MCF 10A (cell line): ENCODE measurements at regions of chr2 and their contacts with region 1.

Region 1: GRCh38 chr2:88159955-88160415 is 10.2 kb upstream of the THNSL2 start:
- DNase-seq: peak; percentile 78
- H3K4me3 Mint-ChIP-seq: no peak overlapping the region
- H3K27ac Mint-ChIP-seq: no peak overlapping the region
- H3K4me1 Mint-ChIP-seq: no peaks in the 10 kb centered on the region
- H3K27me3 Mint-ChIP-seq: no peaks in the 10 kb centered on the region
- CTCF ChIP-seq: peak; percentile 78

Region 2: DNA sequence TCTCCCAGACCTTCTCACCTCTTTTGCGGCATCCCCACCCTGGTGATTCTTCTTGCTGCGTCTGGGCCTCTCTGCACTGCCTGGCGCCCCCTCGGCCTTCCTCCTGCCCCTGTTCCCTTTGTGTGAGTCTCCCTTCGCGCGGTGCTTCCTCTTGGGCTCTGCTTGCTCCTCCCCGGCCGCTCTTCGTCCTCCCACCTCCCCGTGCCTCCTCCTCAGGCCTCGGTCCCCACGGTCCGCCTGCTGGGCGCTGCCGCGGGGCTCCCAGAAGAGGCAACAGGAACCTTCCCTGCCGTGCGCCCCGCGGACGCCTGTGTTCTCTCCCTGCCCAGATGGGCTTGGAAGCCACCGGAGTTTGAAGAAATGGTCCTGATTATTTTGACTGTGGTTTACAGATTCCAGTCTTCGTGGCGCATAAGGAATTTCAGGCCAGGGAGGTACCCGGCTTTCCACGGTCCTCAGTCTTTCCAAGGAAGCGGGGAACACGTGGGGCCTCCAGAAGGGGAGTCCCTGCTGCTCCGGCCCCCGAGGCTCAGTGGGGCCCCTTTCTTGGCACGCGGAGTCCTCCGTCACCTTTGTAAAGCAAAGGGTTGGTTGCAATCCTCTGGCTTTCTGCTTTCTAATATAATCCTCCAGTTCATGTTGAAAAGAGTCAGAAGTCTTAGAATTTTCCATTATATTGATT is 156.8 kb before region 1 on chr2:
- CTCF ChIA-PET with region 1: interaction called, 5 read pairs
- POLR2A ChIA-PET with region 1: no interaction called
- intact Hi-C with region 1: loop called (anchors 2 kb)
- DNase-seq: no peak
- H3K4me3 Mint-ChIP-seq: no peak overlapping the region
- H3K27ac Mint-ChIP-seq: no peak overlapping the region
- H3K4me1 Mint-ChIP-seq: no peaks in the 10 kb centered on the region
- H3K27me3 Mint-ChIP-seq: no peaks in the 10 kb centered on the region
- CTCF ChIP-seq: no peak

Region 3: DNA sequence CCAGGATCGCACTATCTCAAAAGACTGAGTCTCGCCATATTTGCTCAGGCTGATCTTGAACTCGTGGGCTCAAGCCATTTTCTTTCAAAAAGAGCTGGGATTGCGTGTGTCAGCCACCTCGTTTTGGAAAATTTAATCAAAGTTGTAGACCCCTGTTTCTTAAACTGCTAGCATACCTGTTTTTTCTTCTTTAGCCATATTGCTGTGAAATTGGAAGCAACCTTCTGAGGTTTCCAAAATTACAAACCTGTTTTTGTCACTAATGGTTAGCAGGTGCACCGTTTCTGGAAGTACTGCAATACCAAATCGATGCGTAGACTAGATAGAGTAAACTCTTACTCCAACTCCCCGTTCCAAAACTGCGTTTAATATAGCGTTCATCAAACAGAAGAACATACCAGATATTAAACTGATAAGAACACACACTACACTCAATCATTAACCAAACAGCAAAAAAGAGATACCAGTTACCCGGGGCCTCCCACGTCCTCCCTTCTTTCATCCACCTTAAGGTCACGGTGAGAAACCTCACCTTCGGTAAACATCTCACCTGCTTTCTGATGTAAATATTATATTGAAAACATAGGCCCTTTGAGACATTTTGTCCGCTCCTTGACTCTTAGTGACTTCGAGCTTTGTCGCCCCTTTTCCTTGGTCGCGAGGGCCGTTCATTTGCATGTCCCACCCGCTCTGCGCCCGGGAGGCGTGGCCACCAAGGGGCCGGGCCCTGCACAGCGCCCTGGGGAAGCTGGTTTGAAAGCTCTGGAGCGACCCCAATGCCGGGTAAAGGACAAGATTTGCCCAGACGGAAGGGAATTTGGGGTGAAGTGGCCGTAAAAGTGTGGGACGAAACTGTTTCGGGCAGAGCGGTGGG is 143.7 kb before region 1 on chr2 and contains the start of gene RNU2-63P:
- CTCF ChIA-PET with region 1: interaction called, 3 read pairs
- POLR2A ChIA-PET with region 1: no interaction called
- intact Hi-C with region 1: loop called (anchors 5 kb)
- DNase-seq: peak; percentile 92
- H3K4me3 Mint-ChIP-seq: peak within 1 kb of the TSS; percentile 98
- H3K27ac Mint-ChIP-seq: peak within 1 kb of the TSS; percentile 100
- H3K4me1 Mint-ChIP-seq: peaks cover 13% of the 10 kb centered on the region
- H3K27me3 Mint-ChIP-seq: no peaks in the 10 kb centered on the region
- CTCF ChIP-seq: no peak
- total RNA-seq, gene RNU2-63P: 5.0 and 9.1 TPM in 2 replicates

Region 4: DNA sequence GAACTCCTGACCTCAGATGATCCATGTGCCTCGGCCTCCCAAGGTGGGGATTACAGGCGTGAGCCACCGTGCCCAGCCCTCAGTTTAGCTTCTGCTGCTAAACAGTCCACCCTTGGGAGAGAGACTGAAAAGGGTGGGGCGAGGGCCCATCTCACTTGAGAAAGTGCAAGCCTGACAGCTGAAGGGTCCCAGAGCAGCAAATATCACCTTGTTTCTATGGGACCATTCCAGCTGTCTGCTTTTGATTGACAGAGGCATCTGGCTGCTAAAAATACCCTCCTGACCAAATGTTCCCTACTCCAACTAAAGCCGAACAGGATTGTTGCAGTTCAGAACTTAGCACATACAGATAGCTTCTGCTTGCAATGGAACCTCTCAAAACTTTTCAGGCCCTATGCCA is 92.8 kb before region 1 on chr2:
- CTCF ChIA-PET with region 1: interaction called, 293 read pairs
- POLR2A ChIA-PET with region 1: interaction called, 5 read pairs
- intact Hi-C with region 1: no loop called
- DNase-seq: no peak
- H3K4me3 Mint-ChIP-seq: no peak overlapping the region
- H3K27ac Mint-ChIP-seq: no peak overlapping the region
- H3K4me1 Mint-ChIP-seq: no peaks in the 10 kb centered on the region
- H3K27me3 Mint-ChIP-seq: no peaks in the 10 kb centered on the region
- CTCF ChIP-seq: no peak

Region 5: GRCh38 chr2:88170472-88170892 is 10.5 kb after region 1 on chr2:
- CTCF ChIA-PET with region 1: interaction called, 15 read pairs
- POLR2A ChIA-PET with region 1: no interaction called
- intact Hi-C with region 1: no loop called
- DNase-seq: peak; percentile 26
- H3K4me3 Mint-ChIP-seq: peak overlapping the region; percentile 72
- H3K27ac Mint-ChIP-seq: peak overlapping the region; percentile 76
- H3K4me1 Mint-ChIP-seq: no peaks in the 10 kb centered on the region
- H3K27me3 Mint-ChIP-seq: no peaks in the 10 kb centered on the region
- CTCF ChIP-seq: no peak

Region 6: GRCh38 chr2:88296247-88296646 is 136.3 kb after region 1 on chr2:
- CTCF ChIA-PET with region 1: no interaction called
- POLR2A ChIA-PET with region 1: no interaction called
- intact Hi-C with region 1: no loop called
- DNase-seq: no peak
- H3K4me3 Mint-ChIP-seq: no peak overlapping the region
- H3K27ac Mint-ChIP-seq: no peak overlapping the region
- H3K4me1 Mint-ChIP-seq: no peaks in the 10 kb centered on the region
- H3K27me3 Mint-ChIP-seq: no peaks in the 10 kb centered on the region
- CTCF ChIP-seq: no peak